ENCODE measurements at regions of chr7 and their contacts with region 1.

Region 1: DNA sequence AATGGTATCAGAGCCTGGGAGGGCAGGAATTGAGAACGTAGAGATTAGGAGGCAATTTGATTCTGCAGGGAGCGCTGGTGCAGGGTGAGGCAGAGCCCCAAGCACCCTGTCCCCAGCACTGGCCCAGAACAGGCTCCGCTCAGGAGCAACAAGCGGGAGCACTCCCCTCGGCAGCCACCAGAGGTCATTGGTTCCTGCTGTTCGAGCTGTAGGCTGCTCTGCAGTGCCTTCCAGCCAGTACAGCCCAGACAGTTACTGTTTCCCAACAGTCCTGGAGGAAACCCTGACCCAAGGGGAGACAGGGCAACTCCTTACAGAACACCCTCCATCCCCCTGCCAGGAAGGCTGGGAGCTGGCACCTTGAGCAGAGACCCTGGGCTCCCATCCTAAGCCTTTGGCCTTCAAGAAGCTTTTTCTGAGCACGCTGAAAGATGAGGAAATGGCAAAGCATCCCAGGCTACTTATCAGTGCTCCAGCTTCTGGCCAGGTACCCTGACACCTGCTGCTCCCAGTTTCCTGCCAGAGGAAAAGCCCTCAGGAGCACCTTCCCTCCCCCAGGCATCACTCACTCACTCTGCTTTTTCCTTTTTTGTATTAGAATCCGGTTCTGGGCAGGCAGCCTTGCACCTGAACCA is 71.2 kb upstream of the EFCAB10 start:
- DNase-seq: peak; percentile 81 to 83 (median 82)
- ATAC-seq: peak; percentile 88 to 94 (median 89)
- H3K4me3 ChIP-seq: no peak overlapping the region
- H3K27ac ChIP-seq: peak overlapping the region in 1 of 3 donors; percentile 18
- H3K4me1 ChIP-seq: peaks cover 0 to 45% (median 20%) of the 10 kb centered on the region in 4 donors
- H3K27me3 ChIP-seq: no peaks in the 10 kb centered on the region
- CTCF ChIP-seq: peak; percentile 86 to 92 (median 90)
- POLR2A ChIP-seq: no peak

Region 2: GRCh38 chr7:106041140-106041717 is 388.8 kb after region 1 on chr7:
- intact Hi-C with region 1: loop called in 1 of 2 experiments (anchors 10 kb)
- DNase-seq: no peak
- ATAC-seq: peak; percentile 46 to 73 (median 58)
- H3K4me3 ChIP-seq: no peak overlapping the region
- H3K27ac ChIP-seq: no peak overlapping the region
- H3K4me1 ChIP-seq: peaks cover 0 to 7% (median 0%) of the 10 kb centered on the region in 4 donors
- H3K27me3 ChIP-seq: no peaks in the 10 kb centered on the region
- CTCF ChIP-seq: peak; percentile 48 to 61 (median 53)
- POLR2A ChIP-seq: no peak